ENCODE measurements at regions of chr17 and their contacts with region 1.

Region 1: DNA sequence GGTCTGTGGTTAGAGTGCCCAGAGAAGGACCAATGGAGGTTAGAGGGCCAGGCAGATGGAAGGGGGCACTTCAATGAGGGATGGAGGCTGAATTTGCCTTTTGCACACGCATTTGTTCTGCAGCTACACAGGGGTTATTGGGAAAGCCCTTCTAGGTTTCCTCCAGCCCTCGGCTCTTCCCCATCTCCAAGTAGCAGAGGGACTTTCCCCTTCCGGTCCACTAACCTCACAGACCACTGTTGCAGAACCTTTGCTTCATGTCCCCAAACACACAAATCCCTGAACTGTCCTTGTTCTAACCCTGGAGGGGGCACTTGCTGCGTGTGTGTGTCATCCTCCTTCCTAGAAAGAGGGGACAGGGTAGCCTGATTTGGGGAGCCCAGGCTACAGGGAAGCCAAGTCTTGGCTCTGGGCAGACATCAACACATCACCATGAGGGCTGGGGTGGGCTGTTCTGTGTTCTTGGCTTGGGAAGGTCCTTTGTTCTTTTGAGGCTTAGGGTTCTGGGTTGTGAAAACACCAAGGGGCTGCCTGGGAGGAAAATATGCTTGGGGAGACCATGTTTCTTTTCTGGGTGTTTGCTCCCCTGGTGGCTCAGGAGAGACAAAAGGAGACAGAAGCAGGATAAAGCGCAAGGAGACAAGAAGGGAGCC is 7.3 kb upstream of the NR1D1 start:
- DNase-seq: peak in 1 of 5 donors; percentile 57
- H3K4me3 ChIP-seq: peak overlapping the region in 1 of 2 donors; percentile 1
- H3K4me3 Mint-ChIP-seq: peak overlapping the region; percentile 56 to 81 (median 76)
- H3K27ac ChIP-seq: peak overlapping the region; percentile 85
- H3K27ac Mint-ChIP-seq: peak overlapping the region; percentile 97 to 100 (median 98)
- H3K4me1 ChIP-seq: peaks cover 100% of the 10 kb centered on the region
- H3K4me1 Mint-ChIP-seq: peaks cover 83 to 100% (median 93%) of the 10 kb centered on the region in 4 donors
- H3K27me3 ChIP-seq: no peaks in the 10 kb centered on the region
- H3K27me3 Mint-ChIP-seq: no peaks in the 10 kb centered on the region

Region 2: DNA sequence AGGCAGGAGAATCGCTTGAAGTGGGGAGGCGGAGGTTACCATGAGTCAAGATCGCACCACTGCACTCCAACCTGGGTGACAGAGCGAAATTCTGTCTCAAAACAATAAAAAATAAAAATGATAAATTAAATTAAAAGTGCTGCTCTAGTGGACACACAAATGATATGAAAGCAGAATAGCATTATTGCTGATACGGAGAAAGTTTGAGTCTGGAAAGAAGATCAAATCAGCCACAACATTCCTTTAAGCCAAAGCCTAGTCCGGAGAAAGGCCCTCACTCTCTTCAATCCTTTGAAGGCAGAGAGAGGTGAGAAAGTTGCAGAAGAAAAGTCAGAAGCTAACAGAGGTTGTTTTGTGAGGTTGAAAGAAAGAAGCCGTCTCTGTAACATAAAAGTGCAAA is 107.5 kb before region 1 on chr17:
- CTCF ChIA-PET with region 1: no interaction called
- POLR2A ChIA-PET with region 1: no interaction called
- intact Hi-C with region 1: no loop called
- DNase-seq: no peak
- H3K4me3 ChIP-seq: no peak overlapping the region
- H3K4me3 Mint-ChIP-seq: no peak overlapping the region
- H3K27ac ChIP-seq: no peak overlapping the region
- H3K27ac Mint-ChIP-seq: no peak overlapping the region
- H3K4me1 ChIP-seq: no peaks in the 10 kb centered on the region
- H3K4me1 Mint-ChIP-seq: peaks cover 0 to 1% (median 0%) of the 10 kb centered on the region in 4 donors
- H3K27me3 ChIP-seq: no peaks in the 10 kb centered on the region
- H3K27me3 Mint-ChIP-seq: no peaks in the 10 kb centered on the region

Region 3: GRCh38 chr17:40092581-40092980 is 15.1 kb before region 1 on chr17:
- CTCF ChIA-PET with region 1: interaction called, 217 read pairs
- POLR2A ChIA-PET with region 1: interaction called, 494 read pairs
- intact Hi-C with region 1: no loop called
- DNase-seq: peak in 1 of 5 donors; percentile 5
- H3K4me3 ChIP-seq: no peak overlapping the region
- H3K4me3 Mint-ChIP-seq: peak overlapping the region in 2 of 8 donors; percentile 32 to 36
- H3K27ac ChIP-seq: no peak overlapping the region
- H3K27ac Mint-ChIP-seq: peak overlapping the region in 2 of 7 donors; percentile 29 to 74
- H3K4me1 ChIP-seq: peaks cover 42% of the 10 kb centered on the region
- H3K4me1 Mint-ChIP-seq: peaks cover 37 to 51% (median 39%) of the 10 kb centered on the region in 4 donors
- H3K27me3 ChIP-seq: no peaks in the 10 kb centered on the region
- H3K27me3 Mint-ChIP-seq: no peaks in the 10 kb centered on the region

Region 4: DNA sequence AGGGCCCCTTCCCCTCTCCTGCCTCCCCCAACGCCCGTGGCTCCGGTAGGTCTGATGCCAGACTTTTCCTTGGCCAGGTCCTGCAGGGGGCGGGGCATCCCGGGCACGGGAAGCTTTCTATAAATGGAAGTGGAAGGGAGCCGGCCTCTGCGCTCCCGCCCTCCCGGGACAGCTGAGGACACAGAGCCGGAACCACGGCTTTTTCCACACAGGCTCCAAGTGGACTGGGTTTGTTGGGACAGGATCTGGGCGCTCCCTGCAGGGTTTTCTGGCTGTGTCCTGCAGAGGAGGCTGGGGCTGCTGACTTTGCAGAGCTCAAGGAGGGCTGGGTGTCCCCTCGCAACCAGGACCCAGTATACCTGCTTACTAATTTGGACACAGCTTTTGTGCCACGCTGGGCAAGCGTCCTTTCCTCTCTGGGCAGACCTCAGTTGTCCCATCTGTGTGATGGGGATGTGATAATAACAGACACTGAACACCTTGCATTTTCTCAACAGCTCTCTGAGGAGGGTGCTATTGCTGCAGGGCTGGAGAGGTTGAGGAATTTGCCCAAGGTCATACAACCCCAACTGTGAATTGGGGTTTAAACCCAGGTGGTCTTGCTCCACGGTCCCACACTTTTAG is 392.0 kb after region 1 on chr17:
- CTCF ChIA-PET with region 1: no interaction called
- POLR2A ChIA-PET with region 1: no interaction called
- intact Hi-C with region 1: no loop called
- DNase-seq: no peak
- H3K4me3 ChIP-seq: no peak overlapping the region
- H3K4me3 Mint-ChIP-seq: no peak overlapping the region
- H3K27ac ChIP-seq: no peak overlapping the region
- H3K27ac Mint-ChIP-seq: no peak overlapping the region
- H3K4me1 ChIP-seq: no peaks in the 10 kb centered on the region
- H3K4me1 Mint-ChIP-seq: peaks cover 0 to 3% (median 0%) of the 10 kb centered on the region in 4 donors
- H3K27me3 ChIP-seq: no peaks in the 10 kb centered on the region
- H3K27me3 Mint-ChIP-seq: no peaks in the 10 kb centered on the region

Measured in CD4-positive, alpha-beta memory T cell (primary cell).